Naive thymus-derived CD4-positive, alpha-beta T cell (primary cell): ENCODE measurements at regions of chr18 and their contacts with region 1.

Region 1: DNA sequence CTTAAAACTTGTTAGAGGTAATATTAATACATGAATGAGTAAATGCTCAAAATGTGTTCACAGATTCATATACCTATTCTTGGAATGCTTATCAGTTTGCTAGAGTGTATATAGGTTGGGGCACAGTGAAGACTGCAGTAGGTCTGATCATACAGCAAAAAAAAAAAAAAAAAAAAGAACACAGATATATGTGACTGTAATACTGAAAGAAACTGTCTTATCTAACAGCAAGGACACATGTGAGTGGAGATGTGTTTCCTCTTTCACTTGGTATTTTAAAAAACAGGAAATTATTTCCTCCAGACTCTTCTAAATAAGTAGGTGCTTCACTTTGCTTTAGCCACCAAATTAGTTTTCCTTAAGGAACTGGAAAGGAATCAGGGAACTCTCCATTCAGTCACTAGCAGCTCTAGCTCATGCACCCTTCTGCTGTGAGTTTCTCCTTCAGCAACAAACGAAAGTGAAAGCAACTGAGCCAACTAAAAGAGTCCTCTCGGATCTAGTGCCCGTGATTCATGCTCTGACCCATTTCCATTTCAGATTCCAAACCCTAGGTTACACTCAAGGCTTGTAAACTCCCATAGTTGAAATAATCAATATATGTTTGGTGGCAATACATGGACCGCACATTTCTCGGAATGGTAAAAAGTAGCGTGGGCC is 98.5 kb downstream of the DSEL start:
- DNase-seq: peak in 7 of 9 donors; percentile 16 to 50 (median 36)
- ATAC-seq: peak; percentile 57
- H3K4me3 ChIP-seq: peak overlapping the region; percentile 53
- H3K4me3 Mint-ChIP-seq: peak overlapping the region; percentile 36 to 81 (median 73)
- H3K27ac ChIP-seq: no peak overlapping the region
- H3K27ac Mint-ChIP-seq: peak overlapping the region; percentile 33 to 83 (median 49)
- H3K4me1 ChIP-seq: no peaks in the 10 kb centered on the region
- H3K4me1 Mint-ChIP-seq: peaks cover 3 to 10% (median 9%) of the 10 kb centered on the region in 7 donors
- H3K27me3 ChIP-seq: no peaks in the 10 kb centered on the region
- H3K27me3 Mint-ChIP-seq: no peaks in the 10 kb centered on the region

Region 2: GRCh38 chr18:67243799-67244587 is 174.0 kb before region 1 on chr18:
- CTCF ChIA-PET with region 1: no interaction called
- POLR2A ChIA-PET with region 1: no interaction called
- intact Hi-C with region 1: loop called in 1 of 2 experiments (anchors 10 kb)
- DNase-seq: no peak
- ATAC-seq: no peak
- H3K4me3 ChIP-seq: peak overlapping the region; percentile 22
- H3K4me3 Mint-ChIP-seq: peak overlapping the region; percentile 1 to 96 (median 82)
- H3K27ac ChIP-seq: no peak overlapping the region
- H3K27ac Mint-ChIP-seq: peak overlapping the region; percentile 13 to 91 (median 73)
- H3K4me1 ChIP-seq: peaks cover 0 to 20% of the 10 kb centered on the region in 2 donors
- H3K4me1 Mint-ChIP-seq: peaks cover 6 to 46% (median 29%) of the 10 kb centered on the region in 7 donors
- H3K27me3 ChIP-seq: no peaks in the 10 kb centered on the region
- H3K27me3 Mint-ChIP-seq: no peaks in the 10 kb centered on the region

Region 3: GRCh38 chr18:67402543-67402942 is 15.5 kb before region 1 on chr18:
- CTCF ChIA-PET with region 1: no interaction called
- POLR2A ChIA-PET with region 1: no interaction called
- intact Hi-C with region 1: loop called in 1 of 2 experiments (anchors 1 kb)
- DNase-seq: no peak
- ATAC-seq: no peak
- H3K4me3 ChIP-seq: no peak overlapping the region
- H3K4me3 Mint-ChIP-seq: no peak overlapping the region
- H3K27ac ChIP-seq: no peak overlapping the region
- H3K27ac Mint-ChIP-seq: no peak overlapping the region
- H3K4me1 ChIP-seq: no peaks in the 10 kb centered on the region
- H3K4me1 Mint-ChIP-seq: peaks cover 0 to 6% (median 0%) of the 10 kb centered on the region in 7 donors
- H3K27me3 ChIP-seq: no peaks in the 10 kb centered on the region
- H3K27me3 Mint-ChIP-seq: peaks cover 0 to 17% (median 11%) of the 10 kb centered on the region in 5 donors